MCF 10A (cell line): ENCODE measurements at regions of chr5 and their contacts with region 1.

Region 1: DNA sequence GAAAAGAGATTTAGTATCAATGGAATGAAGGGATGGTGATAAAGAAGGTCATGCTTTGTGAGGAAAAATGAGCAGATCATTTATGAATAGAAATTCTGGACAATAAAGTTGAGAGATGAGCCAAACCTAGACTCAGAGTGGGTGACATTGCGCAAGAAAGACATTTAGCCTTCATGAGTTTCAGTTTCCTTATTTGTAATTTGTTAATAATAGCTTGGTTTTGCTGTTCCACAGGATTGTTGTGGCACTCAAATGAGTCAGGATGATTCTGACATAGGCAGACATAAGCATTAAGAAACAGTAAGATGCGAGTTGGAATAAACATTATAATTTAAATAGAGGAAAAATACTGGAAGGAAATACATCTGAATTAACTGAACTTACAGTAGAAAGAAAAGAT is 34.8 kb downstream of the ITGA2 start:
- DNase-seq: peak; percentile 84
- H3K4me3 Mint-ChIP-seq: no peak overlapping the region
- H3K27ac Mint-ChIP-seq: no peak overlapping the region
- H3K4me1 Mint-ChIP-seq: peaks cover 12% of the 10 kb centered on the region
- H3K27me3 Mint-ChIP-seq: no peaks in the 10 kb centered on the region
- CTCF ChIP-seq: no peak

Region 2: GRCh38 chr5:52517667-52518066 is 506.3 kb before region 1 on chr5:
- CTCF ChIA-PET with region 1: no interaction called
- POLR2A ChIA-PET with region 1: no interaction called
- intact Hi-C with region 1: no loop called
- DNase-seq: no peak
- H3K4me3 Mint-ChIP-seq: no peak overlapping the region
- H3K27ac Mint-ChIP-seq: no peak overlapping the region
- H3K4me1 Mint-ChIP-seq: no peaks in the 10 kb centered on the region
- H3K27me3 Mint-ChIP-seq: peaks cover 78% of the 10 kb centered on the region
- CTCF ChIP-seq: no peak

Region 3: GRCh38 chr5:53008751-53009150 is 15.2 kb before region 1 on chr5:
- CTCF ChIA-PET with region 1: interaction called, 4 read pairs
- POLR2A ChIA-PET with region 1: interaction called, 21 read pairs
- intact Hi-C with region 1: no loop called
- DNase-seq: peak; percentile 76
- H3K4me3 Mint-ChIP-seq: no peak overlapping the region
- H3K27ac Mint-ChIP-seq: no peak overlapping the region
- H3K4me1 Mint-ChIP-seq: peaks cover 22% of the 10 kb centered on the region
- H3K27me3 Mint-ChIP-seq: no peaks in the 10 kb centered on the region
- CTCF ChIP-seq: no peak

Region 4: GRCh38 chr5:53035868-53036381 is 12.0 kb after region 1 on chr5:
- CTCF ChIA-PET with region 1: interaction called, 4 read pairs
- POLR2A ChIA-PET with region 1: interaction called, 10 read pairs
- intact Hi-C with region 1: no loop called
- DNase-seq: peak; percentile 64
- H3K4me3 Mint-ChIP-seq: no peak overlapping the region
- H3K27ac Mint-ChIP-seq: peak overlapping the region; percentile 76
- H3K4me1 Mint-ChIP-seq: peaks cover 43% of the 10 kb centered on the region
- H3K27me3 Mint-ChIP-seq: no peaks in the 10 kb centered on the region
- CTCF ChIP-seq: peak; percentile 23